H1 (cell line): ENCODE measurements at regions of chr20 and their contacts with region 1.

Region 1: DNA sequence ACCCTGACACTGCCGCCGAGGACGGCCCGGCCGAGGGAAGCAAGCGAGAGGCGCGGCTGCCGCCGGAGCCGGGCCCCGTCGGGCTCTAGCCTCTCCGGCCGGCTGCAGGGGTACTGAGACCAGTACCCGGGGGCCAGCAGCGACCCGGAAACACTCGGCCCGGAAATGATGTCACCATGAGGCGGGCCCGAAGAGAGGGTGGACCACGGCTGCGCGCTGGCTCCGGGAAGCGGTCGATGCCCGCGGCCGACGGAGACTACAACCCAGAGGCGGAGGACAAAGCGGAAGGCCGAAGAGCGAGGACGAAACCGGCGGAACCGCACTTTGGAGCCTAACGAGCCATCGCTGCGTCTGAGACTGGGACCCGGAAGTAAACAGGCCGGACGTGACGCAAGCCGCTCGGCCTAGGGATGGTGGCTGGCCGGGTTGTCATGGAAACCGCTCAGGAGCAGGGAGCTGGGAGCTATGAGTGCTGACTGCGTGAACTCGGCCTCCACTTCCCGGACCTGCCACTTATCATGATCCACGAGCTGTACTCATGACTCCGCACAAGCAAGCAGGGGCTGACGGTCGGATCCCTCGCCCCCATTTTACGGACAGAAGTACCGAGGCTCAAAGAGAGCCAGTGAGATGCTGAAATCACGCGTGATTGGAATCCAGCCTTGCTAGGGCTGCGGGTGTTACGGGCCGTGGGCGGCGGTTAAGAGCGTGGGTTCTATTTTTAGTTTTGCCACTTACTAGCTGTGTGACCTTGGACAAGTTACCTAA is at the start of gene SPATA2:
- DNase-seq: peak; percentile 80 to 96
- H3K4me3 ChIP-seq: peak within 1 kb of the TSS; percentile 71 to 99 (median 96)
- H3K27ac ChIP-seq: peak within 1 kb of the TSS; percentile 100
- H3K4me1 ChIP-seq: peaks cover 0 to 6% (median 3%) of the 10 kb centered on the region in 4 experiments; a peak in 2 of 7 replicates
- H3K27me3 ChIP-seq: no peaks in the 10 kb centered on the region
- CTCF ChIP-seq: no peak
- EP300 ChIP-seq: no peak
- POLR2A ChIP-seq: peak in 1 of 2 experiments; percentile 55; a peak in 1 of 3 replicates
- RAD21 ChIP-seq: no peak
- total RNA-seq, gene SPATA2: 11.9 and 13.0 TPM in 2 replicates

Region 2: GRCh38 chr20:49936153-49937027 is 20.8 kb after region 1 on chr20 and contains the start of gene RNF114:
- CTCF ChIA-PET with region 1: interaction called, 10 read pairs
- POLR2A ChIA-PET with region 1: interaction called, 4 read pairs
- DNase-seq: peak; percentile 44 to 88
- H3K4me3 ChIP-seq: peak within 1 kb of the TSS; percentile 74 to 99 (median 91)
- H3K27ac ChIP-seq: peak within 1 kb of the TSS; percentile 76; the same call in 1 of the 2 replicates
- H3K4me1 ChIP-seq: peaks cover 3 to 14% (median 8%) of the 10 kb centered on the region in 4 experiments; a peak in 5 of 7 replicates
- H3K27me3 ChIP-seq: no peaks in the 10 kb centered on the region
- CTCF ChIP-seq: no peak
- EP300 ChIP-seq: no peak
- POLR2A ChIP-seq: peak; percentile 53 to 62; a peak in 2 of 3 replicates
- RAD21 ChIP-seq: no peak
- total RNA-seq, gene RNF114: 81.7 and 82.0 TPM in 2 replicates

Region 3: DNA sequence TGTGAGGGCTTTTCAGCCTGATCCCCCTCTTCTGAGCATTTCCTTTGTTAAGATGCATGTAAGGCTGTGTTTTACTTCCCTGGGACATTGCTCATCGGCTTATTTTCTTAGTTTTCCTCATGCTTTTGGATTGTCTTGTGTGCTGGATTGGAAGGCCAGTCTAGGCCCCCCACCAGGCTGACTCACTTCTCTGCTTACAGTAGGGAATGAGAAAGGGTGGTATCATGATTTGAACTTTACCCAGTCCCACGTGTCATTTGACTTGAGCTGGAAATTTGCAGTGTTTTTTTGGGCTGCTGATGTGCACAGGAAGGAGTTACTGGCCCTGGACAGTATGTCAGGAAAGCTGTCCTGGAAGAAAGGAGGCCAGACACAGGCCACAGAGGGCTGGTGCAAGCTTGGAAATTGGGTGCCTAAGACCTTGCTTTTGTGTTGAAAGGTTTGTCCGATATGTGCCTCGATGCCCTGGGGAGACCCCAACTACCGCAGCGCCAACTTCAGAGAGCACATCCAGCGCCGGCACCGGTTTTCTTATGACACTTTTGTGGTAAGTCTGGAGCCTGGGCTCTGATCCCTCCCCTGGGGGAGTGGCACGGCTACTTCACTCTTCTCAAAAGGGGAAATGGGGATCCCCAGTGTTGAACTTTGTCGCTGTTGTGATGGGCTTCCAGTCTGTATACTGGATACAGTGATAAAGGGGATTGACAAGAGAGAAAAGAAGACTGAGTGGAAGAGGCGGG is 33.4 kb after region 1 on chr20:
- CTCF ChIA-PET with region 1: no interaction called
- POLR2A ChIA-PET with region 1: no interaction called
- DNase-seq: no peak
- H3K4me3 ChIP-seq: no peak overlapping the region
- H3K27ac ChIP-seq: no peak overlapping the region
- H3K4me1 ChIP-seq: no peaks in the 10 kb centered on the region
- H3K27me3 ChIP-seq: no peaks in the 10 kb centered on the region
- CTCF ChIP-seq: no peak
- EP300 ChIP-seq: no peak
- POLR2A ChIP-seq: no peak
- RAD21 ChIP-seq: no peak